Activated CD4-positive, alpha-beta memory T cell treated with anti-CD3 and anti-CD28 coated beads, Interleukin-2, amount 10 ng/mL, durations not matched to agents 7 days and 5 days (primary cell): ENCODE measurements at regions of chr17 and their contacts with region 1.

Region 1: GRCh38 chr17:60599620-60600489 is at the start of gene PPM1D:
- DNase-seq: peak; percentile 98
- H3K4me3 Mint-ChIP-seq: peak within 1 kb of the TSS; percentile 96
- H3K27ac Mint-ChIP-seq: peak within 1 kb of the TSS; percentile 95
- H3K4me1 Mint-ChIP-seq: peaks cover 46% of the 10 kb centered on the region
- H3K27me3 Mint-ChIP-seq: no peaks in the 10 kb centered on the region
- total RNA-seq, gene PPM1D: 17.8 to 18.8 TPM

Region 2: GRCh38 chr17:60077672-60078519 is 522.0 kb before region 1 on chr17:
- CTCF ChIA-PET with region 1: interaction called, 4 read pairs
- POLR2A ChIA-PET with region 1: interaction called, 10 read pairs
- DNase-seq: no peak
- H3K4me3 Mint-ChIP-seq: peak overlapping the region; percentile 91
- H3K27ac Mint-ChIP-seq: peak overlapping the region; percentile 92
- H3K4me1 Mint-ChIP-seq: peaks cover 43% of the 10 kb centered on the region
- H3K27me3 Mint-ChIP-seq: no peaks in the 10 kb centered on the region

Region 3: GRCh38 chr17:60392042-60392844 is 207.6 kb before region 1 on chr17 and contains the start of gene USP32:
- CTCF ChIA-PET with region 1: no interaction called
- POLR2A ChIA-PET with region 1: interaction called, 12 read pairs
- DNase-seq: peak; percentile 99
- H3K4me3 Mint-ChIP-seq: peak within 1 kb of the TSS; percentile 94
- H3K27ac Mint-ChIP-seq: peak within 1 kb of the TSS; percentile 90
- H3K4me1 Mint-ChIP-seq: peaks cover 46% of the 10 kb centered on the region
- H3K27me3 Mint-ChIP-seq: no peaks in the 10 kb centered on the region
- total RNA-seq, gene USP32: 35.8 to 40.1 TPM

Region 4: DNA sequence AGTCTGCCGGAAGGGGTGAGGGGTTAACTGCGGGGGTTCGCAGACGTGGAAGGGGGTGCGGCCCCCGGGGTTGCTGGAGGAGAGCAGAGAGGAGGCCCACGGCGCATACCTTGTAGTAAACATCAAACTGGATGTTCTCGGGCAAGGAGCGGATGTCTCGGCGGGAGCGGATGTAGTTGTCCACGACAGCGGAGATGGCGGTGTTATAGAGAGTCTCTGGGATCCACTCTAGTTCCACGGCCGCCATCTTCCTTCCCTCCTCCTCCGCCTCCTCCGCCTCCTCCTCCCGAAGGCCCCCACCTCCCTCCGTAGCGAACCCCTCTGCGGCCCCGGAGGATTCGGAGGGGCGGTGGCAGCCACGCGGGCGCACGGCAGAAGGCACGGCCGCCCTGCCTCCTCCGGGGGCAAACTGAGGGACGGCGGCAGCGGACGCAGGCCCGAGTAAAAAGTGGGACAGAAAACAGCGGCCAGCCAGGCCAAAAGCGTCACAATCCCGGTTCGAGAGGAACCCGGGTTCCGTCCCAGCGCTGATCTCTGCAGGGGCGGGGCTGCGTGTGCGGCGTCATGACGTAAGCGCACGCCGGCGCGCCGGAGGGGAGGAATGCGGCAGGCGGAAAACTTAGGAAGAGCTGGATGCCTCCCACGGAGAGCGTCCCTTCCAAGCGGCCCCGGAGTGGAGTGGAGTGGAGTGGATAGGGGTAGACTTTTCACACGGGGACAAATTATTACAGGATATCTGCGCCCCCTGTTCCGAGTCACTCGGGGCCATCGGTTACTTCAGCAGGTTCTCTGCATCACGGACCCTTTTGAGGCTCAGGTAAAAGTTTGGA is 74.0 kb before region 1 on chr17 and contains the start of gene APPBP2:
- CTCF ChIA-PET with region 1: interaction called, 18 read pairs
- POLR2A ChIA-PET with region 1: interaction called, 9 read pairs
- DNase-seq: peak; percentile 75
- H3K4me3 Mint-ChIP-seq: peak within 1 kb of the TSS; percentile 99
- H3K27ac Mint-ChIP-seq: peak within 1 kb of the TSS; percentile 95
- H3K4me1 Mint-ChIP-seq: peaks cover 36% of the 10 kb centered on the region
- H3K27me3 Mint-ChIP-seq: no peaks in the 10 kb centered on the region
- total RNA-seq, gene APPBP2: 34.9 to 36.0 TPM

Region 5: DNA sequence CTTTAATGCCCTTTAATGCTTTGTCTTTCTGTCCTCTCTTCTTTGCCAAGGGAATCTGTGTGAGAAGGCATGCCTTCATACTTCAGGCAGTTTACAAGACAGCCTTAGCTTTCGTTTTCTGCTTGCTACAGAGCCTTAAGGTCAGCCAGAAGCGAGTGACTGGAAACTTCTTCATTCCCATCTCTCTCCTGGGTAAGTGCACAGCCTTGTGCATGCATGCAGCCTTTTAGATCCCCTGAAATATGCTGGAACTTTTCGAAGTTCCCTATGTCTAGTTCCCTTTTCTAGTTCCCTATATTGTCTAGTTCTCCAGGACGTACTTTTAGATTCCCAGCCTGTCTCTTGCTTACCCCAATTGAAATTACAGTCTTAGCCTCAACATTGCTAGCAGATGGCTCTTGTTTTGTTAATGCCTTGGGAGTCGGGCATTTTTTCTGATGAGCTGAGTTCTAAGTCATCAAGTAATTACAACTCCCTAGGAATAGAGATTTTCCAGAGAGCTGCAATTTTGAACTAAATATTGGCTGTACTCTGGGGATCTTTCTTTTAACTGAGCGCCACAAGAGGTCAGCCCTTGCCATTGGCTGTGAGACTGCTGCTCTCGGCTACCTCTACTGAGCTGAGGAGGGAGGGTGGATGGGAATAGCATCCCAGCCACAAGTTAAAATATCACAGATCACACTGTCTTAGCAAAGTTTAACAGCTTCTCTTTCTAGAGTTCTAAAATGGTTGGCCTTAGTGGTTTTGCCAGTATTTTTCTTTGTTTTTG is 22.5 kb before region 1 on chr17:
- CTCF ChIA-PET with region 1: interaction called, 7 read pairs
- POLR2A ChIA-PET with region 1: interaction called, 23 read pairs
- DNase-seq: no peak
- H3K4me3 Mint-ChIP-seq: peak overlapping the region; percentile 58
- H3K27ac Mint-ChIP-seq: no peak overlapping the region
- H3K4me1 Mint-ChIP-seq: peaks cover 7% of the 10 kb centered on the region
- H3K27me3 Mint-ChIP-seq: peaks cover 3% of the 10 kb centered on the region

Region 6: DNA sequence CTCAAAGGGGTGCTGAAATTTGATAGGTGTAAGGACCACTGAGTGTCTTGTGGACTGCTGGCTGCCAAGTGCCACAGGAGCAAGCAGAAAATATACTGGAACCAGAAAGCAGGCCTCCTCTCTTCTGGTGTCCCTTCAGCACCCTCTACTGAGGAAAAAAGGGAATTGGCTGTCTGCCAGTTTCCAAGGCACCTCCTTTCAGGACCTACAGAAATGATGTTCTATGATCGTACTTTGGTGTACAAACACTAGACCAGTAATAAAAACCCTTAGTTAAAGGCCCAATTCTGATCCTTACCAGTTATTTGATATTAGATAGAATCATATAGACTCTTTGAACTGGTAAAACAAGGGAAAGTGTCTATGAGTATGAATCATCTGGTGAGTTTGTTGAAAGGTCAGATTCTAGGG is 42.0 kb after region 1 on chr17:
- CTCF ChIA-PET with region 1: interaction called, 17 read pairs
- POLR2A ChIA-PET with region 1: interaction called, 10 read pairs
- DNase-seq: peak; percentile 47
- H3K4me3 Mint-ChIP-seq: no peak overlapping the region
- H3K27ac Mint-ChIP-seq: no peak overlapping the region
- H3K4me1 Mint-ChIP-seq: peaks cover 9% of the 10 kb centered on the region
- H3K27me3 Mint-ChIP-seq: no peaks in the 10 kb centered on the region

Region 7: GRCh38 chr17:60677308-60678124 is 77.7 kb after region 1 on chr17 and contains the start of gene BCAS3:
- CTCF ChIA-PET with region 1: interaction called, 5 read pairs
- POLR2A ChIA-PET with region 1: interaction called, 17 read pairs
- DNase-seq: peak; percentile 98
- H3K4me3 Mint-ChIP-seq: peak within 1 kb of the TSS; percentile 86
- H3K27ac Mint-ChIP-seq: peak within 1 kb of the TSS; percentile 69
- H3K4me1 Mint-ChIP-seq: peaks cover 16% of the 10 kb centered on the region
- H3K27me3 Mint-ChIP-seq: no peaks in the 10 kb centered on the region
- total RNA-seq, gene BCAS3: 16.2 to 19.8 TPM